Kidney (tissue), 22 donors: ENCODE measurements at regions of chr7 and their contacts with region 1.

Region 1: GRCh38 chr7:32500922-32501341 is 5.6 kb downstream of the AVL9 start:
- DNase-seq: no peak
- H3K4me3 ChIP-seq: no peak overlapping the region
- H3K27ac ChIP-seq: no peak overlapping the region
- H3K4me1 ChIP-seq: peaks cover 0 to 4% (median 0%) of the 10 kb centered on the region in 3 donors
- H3K27me3 ChIP-seq: no peaks in the 10 kb centered on the region
- CTCF ChIP-seq: no peak

Region 2: DNA sequence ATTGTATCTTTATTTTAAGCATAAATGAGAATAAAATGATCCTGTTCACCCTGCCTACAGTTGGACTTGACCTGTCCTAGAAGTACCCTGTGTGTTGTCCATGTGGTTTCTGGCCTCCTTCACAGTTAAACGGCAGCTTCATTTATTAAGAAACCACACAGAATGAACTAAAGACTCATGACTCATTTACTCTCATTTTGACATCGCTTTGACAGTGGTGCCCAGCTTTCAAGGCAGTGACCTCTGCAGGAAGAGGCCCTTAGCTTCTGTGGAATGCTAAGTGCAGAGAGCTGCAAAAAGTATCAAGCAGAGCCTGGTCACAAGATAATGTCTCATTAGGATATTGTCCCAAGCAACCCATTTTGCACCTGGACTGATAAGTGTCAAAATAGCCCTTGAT is 87.7 kb after region 1 on chr7:
- intact Hi-C with region 1: loop called (anchors 10 kb)
- DNase-seq: no peak
- H3K4me3 ChIP-seq: no peak overlapping the region
- H3K27ac ChIP-seq: no peak overlapping the region
- H3K4me1 ChIP-seq: peaks cover 3 to 19% (median 9%) of the 10 kb centered on the region in 3 donors
- H3K27me3 ChIP-seq: no peaks in the 10 kb centered on the region
- CTCF ChIP-seq: no peak